Caco-2 (cell line): ENCODE measurements at regions of chr12 and their contacts with region 1.

Region 1: DNA sequence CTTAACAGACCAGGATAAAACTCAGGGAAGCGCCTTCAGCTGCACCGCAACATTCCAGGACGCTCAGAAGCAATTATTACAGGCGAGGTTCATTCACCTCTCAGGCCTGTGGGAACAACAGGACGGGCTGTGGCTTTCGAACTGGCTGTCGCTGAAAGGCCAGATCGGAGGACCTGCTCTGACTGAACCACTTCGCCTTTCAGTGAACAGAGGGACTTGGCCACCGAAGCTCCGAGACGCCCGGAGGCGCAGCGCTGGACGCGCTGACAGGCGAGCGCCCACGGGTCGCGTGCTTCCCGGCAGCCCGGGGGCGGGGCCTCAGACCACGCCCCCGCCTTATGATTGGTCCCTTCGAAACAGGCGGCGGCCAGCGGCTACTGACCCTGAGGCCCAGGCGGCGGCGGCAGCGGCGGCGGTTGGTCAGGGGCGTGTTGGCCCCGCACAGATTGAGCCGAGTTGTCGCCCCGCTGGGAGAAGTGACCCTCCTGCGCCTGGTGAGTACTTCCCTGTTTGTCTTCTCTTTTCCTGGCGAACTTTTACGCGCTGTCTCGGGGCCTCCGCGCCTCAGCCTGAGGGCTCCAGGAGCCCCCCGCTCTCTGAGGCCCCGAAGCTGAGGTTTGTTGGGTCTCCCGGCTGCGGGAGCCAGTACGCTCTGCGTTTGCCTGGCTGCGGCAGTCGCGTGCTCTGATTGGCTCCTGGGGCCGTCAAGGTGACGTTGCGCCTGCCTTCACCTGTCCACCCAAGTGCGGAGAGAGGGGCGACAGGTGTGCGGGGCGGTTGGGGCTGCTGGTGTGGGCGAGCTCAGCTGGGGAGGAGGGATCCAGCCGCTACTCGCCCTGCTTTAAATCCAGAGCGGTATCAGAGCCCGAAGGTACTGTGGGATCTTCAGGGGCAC is at the start of gene GAS2L3:
- DNase-seq: peak; percentile 92 to 94
- H3K4me3 ChIP-seq: peak within 1 kb of the TSS; percentile 73
- H3K4me3 Mint-ChIP-seq: peak within 1 kb of the TSS; percentile 93
- H3K27ac Mint-ChIP-seq: peak within 1 kb of the TSS; percentile 97
- H3K4me1 ChIP-seq: no peaks in the 10 kb centered on the region
- H3K4me1 Mint-ChIP-seq: peaks cover 5% of the 10 kb centered on the region
- H3K27me3 ChIP-seq: no peaks in the 10 kb centered on the region; the same call in 1 of the 2 replicates
- H3K27me3 Mint-ChIP-seq: peaks cover 3% of the 10 kb centered on the region
- CTCF ChIP-seq: no peak
- total RNA-seq, gene GAS2L3: 25.0 and 27.2 TPM in 2 replicates

Region 2: GRCh38 chr12:100142851-100143559 is 430.5 kb before region 1 on chr12 and contains the start of gene BLTP3B:
- CTCF ChIA-PET with region 1: no interaction called
- POLR2A ChIA-PET with region 1: no interaction called
- intact Hi-C with region 1: loop called (anchors 5 kb)
- DNase-seq: peak; percentile 87 to 89
- H3K4me3 ChIP-seq: peak within 1 kb of the TSS; percentile 99
- H3K4me3 Mint-ChIP-seq: peak within 1 kb of the TSS; percentile 72
- H3K27ac Mint-ChIP-seq: peak within 1 kb of the TSS; percentile 86
- H3K4me1 ChIP-seq: no peaks in the 10 kb centered on the region
- H3K4me1 Mint-ChIP-seq: peaks cover 23% of the 10 kb centered on the region
- H3K27me3 ChIP-seq: no peaks in the 10 kb centered on the region
- H3K27me3 Mint-ChIP-seq: no peaks in the 10 kb centered on the region
- CTCF ChIP-seq: no peak
- total RNA-seq, gene BLTP3B: 26.6 and 29.6 TPM in 2 replicates

Region 3: DNA sequence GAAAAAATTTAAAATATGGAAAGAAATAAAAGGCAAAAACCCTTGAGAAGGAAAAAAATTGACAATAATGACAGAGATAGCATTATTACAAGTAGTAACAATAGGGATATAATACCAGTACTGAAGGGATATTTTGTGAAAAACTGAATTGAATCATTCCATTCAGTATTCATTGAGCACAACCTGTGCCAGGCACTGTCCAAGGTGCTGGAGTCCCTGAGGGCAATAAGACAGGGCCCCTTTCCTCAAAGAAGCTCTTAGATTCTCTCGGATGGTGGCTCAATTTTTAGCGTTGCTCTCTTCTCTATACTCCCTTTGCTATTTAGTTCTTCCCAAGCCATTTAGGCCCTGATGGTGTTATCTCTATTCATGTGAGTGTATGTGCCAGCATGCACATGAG is 34.3 kb before region 1 on chr12:
- CTCF ChIA-PET with region 1: no interaction called
- POLR2A ChIA-PET with region 1: no interaction called
- intact Hi-C with region 1: loop called (anchors 2 kb)
- DNase-seq: peak; percentile 55 to 64
- H3K4me3 ChIP-seq: no peak overlapping the region
- H3K4me3 Mint-ChIP-seq: no peak overlapping the region
- H3K27ac Mint-ChIP-seq: no peak overlapping the region
- H3K4me1 ChIP-seq: no peaks in the 10 kb centered on the region
- H3K4me1 Mint-ChIP-seq: no peaks in the 10 kb centered on the region
- H3K27me3 ChIP-seq: no peaks in the 10 kb centered on the region
- H3K27me3 Mint-ChIP-seq: peaks cover 4% of the 10 kb centered on the region
- CTCF ChIP-seq: no peak

Region 4: GRCh38 chr12:100908501-100908900 is 335.0 kb after region 1 on chr12:
- CTCF ChIA-PET with region 1: no interaction called
- POLR2A ChIA-PET with region 1: no interaction called
- intact Hi-C with region 1: no loop called
- DNase-seq: no peak
- H3K4me3 ChIP-seq: no peak overlapping the region
- H3K4me3 Mint-ChIP-seq: no peak overlapping the region
- H3K27ac Mint-ChIP-seq: no peak overlapping the region
- H3K4me1 ChIP-seq: no peaks in the 10 kb centered on the region
- H3K4me1 Mint-ChIP-seq: no peaks in the 10 kb centered on the region
- H3K27me3 ChIP-seq: no peaks in the 10 kb centered on the region
- H3K27me3 Mint-ChIP-seq: peaks cover 4% of the 10 kb centered on the region
- CTCF ChIP-seq: no peak